Breast epithelium (tissue), 4 donors: ENCODE measurements at regions of chr2 and their contacts with region 1.

Region 1: GRCh38 chr2:20661067-20661980 is 5.6 kb upstream of the GDF7 start:
- DNase-seq: peak in 1 of 2 donors; percentile 51
- H3K4me3 ChIP-seq: no peak overlapping the region
- H3K27ac ChIP-seq: no peak overlapping the region
- H3K4me1 ChIP-seq: peaks cover 0 to 2% of the 10 kb centered on the region in 2 donors
- H3K27me3 ChIP-seq: peaks cover 0 to 43% of the 10 kb centered on the region in 2 donors
- CTCF ChIP-seq: peak; percentile 65 to 91 (median 89)
- POLR2A ChIP-seq: no peak

Region 2: DNA sequence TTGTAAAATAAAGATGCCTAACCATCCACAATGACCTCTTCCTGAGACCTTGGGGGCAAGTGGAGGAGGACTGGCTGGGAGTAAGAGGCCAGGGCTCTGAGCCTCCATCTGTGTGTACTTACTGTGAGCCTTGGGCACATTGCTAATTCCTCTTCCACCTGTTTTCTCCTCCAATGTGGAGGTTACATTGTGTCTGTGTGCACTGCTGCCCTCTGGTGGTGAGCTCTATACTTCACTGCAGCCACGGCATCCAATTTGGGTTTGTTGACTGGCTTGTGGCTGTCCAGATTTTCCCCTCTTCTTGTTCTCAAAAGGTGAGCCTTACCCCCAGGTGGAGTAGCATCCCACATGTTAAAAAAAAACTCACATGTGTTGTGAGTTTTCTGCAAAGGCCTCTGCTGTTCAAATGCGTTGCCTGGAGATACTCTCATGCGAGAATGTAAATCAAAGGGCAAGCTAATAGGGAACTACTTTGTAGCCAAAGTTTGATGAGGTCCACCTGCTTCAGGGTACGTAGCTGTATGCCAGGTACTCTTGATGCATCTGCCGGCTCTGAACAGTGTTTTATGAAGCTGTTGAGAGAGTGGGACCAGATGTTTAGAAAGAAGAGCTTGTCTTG is 301.7 kb after region 1 on chr2:
- intact Hi-C with region 1: loop called (anchors 10 kb)
- DNase-seq: peak; percentile 39 to 74
- H3K4me3 ChIP-seq: no peak overlapping the region
- H3K27ac ChIP-seq: no peak overlapping the region
- H3K4me1 ChIP-seq: no peaks in the 10 kb centered on the region
- H3K27me3 ChIP-seq: peaks cover 0 to 5% of the 10 kb centered on the region in 2 donors
- CTCF ChIP-seq: peak; percentile 51 to 81 (median 80)
- POLR2A ChIP-seq: no peak